Esophagus muscularis mucosa (tissue), 4 donors: ENCODE measurements at regions of chr3 and their contacts with region 1.

Region 1: DNA sequence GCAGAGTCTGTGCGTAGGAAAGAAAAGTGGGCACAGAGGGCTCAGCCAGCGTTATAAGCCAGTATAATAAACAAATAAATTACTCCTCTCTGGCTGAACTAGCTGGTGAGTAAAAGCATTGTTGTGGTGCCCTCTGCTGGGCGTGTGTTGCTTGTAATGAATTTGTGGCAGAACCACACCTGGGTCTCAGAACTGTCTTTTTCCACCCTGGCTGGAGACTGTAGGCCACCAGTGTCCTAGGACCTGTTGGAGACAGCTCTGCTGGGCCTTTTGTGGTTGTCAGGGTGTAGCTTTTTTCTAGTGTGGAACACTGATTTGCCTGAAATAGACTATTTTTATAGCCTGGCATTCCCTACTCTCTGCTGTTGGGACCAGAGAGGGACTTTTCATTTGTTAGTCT is 130.5 kb upstream of the EIF1B start:
- DNase-seq: no peak
- H3K4me3 ChIP-seq: no peak overlapping the region
- H3K27ac ChIP-seq: no peak overlapping the region
- H3K4me1 ChIP-seq: peaks cover 0 to 4% (median 0%) of the 10 kb centered on the region in 4 donors
- H3K27me3 ChIP-seq: no peaks in the 10 kb centered on the region
- CTCF ChIP-seq: peak; percentile 50 to 65 (median 59)
- EP300 ChIP-seq: no peak
- POLR2A ChIP-seq: no peak

Region 2: DNA sequence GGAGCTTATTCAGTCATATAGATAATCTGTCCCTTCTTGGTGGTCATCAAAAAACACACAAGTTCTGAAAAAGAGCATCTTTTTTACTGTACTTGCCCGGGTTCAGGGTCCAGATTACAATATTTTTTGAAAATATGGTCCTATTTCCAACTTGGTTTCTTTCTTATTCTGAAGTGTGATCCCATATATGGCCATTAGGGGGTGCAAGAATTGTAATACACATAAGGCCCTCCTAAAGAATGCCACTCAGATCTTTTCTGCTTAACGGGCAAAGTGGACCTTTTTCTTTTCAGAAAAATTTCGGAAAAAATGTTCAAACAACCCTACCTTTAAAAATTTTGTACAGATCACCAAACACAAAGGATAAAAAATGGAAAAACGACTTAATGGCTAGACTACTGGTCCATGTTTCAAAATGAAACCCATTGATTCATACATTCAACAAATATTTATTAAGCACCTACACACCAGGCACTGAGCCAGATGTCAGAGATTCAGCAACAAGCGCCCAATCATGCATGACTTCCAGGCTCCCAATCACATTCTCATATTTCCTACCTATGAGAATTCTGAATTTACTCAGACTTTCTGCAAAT is 471.6 kb before region 1 on chr3:
- intact Hi-C with region 1: loop called (anchors 5 kb)
- DNase-seq: no peak
- H3K4me3 ChIP-seq: no peak overlapping the region
- H3K27ac ChIP-seq: no peak overlapping the region
- H3K4me1 ChIP-seq: no peaks in the 10 kb centered on the region
- H3K27me3 ChIP-seq: peaks cover 0 to 3% (median 0%) of the 10 kb centered on the region in 4 donors
- CTCF ChIP-seq: peak; percentile 50 to 66 (median 60)
- EP300 ChIP-seq: no peak
- POLR2A ChIP-seq: no peak